ENCODE measurements at regions of chr12 and their contacts with region 1.

Region 1: GRCh38 chr12:95102916-95103671 is 29.7 kb upstream of the NR2C1 start:
- DNase-seq: peak; percentile 90
- ATAC-seq: peak; percentile 98
- H3K4me3 ChIP-seq: no peak overlapping the region
- H3K27ac ChIP-seq: no peak overlapping the region
- H3K4me1 ChIP-seq: peaks cover 19% of the 10 kb centered on the region
- H3K27me3 ChIP-seq: no peaks in the 10 kb centered on the region
- CTCF ChIP-seq: no peak
- EP300 ChIP-seq: peak; percentile 74 to 81; a peak in 3 of 4 replicates
- POLR2A ChIP-seq: no peak
- RAD21 ChIP-seq: no peak

Region 2: DNA sequence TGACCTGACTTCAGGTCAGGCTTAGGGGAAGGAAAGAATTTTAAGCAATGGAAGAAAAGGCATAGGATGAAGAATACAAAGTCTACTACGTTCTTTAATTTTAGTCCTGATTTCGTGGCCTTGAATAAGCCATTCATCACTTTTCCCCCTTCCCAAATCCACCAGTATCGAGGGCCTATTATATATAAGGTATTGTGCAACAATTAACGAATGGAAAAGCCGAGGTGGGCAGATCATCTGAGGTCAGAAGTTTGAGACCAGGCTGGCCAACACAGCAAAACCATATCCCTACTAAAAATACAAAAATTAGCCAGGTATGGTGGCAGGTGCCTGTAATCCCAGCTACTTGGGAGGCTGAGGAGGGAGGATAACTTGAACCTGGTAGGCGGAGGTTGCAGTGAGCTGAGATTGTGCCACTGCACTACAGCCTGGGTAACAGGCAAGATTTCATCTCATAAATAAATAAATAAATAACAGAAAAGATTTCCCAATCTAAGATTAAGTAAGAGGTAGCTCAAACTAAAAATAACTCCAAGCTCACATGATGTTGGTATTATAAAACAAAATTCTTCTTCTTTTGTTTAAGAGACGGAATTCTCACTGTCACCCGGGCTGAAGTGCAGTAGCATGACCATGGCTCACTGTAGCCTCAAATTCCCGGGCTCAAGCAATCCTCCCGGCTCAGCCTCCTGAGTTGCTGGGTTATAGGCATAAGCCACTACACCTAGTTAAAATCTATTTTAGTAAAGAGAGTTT is 28.7 kb after region 1 on chr12:
- CTCF ChIA-PET with region 1: no interaction called
- POLR2A ChIA-PET with region 1: no interaction called
- RAD21 ChIA-PET with region 1: no interaction called
- SMC1A ChIA-PET with region 1: no interaction called
- in situ Hi-C with region 1: no loop called
- intact Hi-C with region 1: no loop called
- DNase-seq: no peak
- ATAC-seq: no peak
- H3K4me3 ChIP-seq: no peak overlapping the region
- H3K27ac ChIP-seq: no peak overlapping the region
- H3K4me1 ChIP-seq: no peaks in the 10 kb centered on the region
- H3K27me3 ChIP-seq: no peaks in the 10 kb centered on the region
- CTCF ChIP-seq: no peak
- EP300 ChIP-seq: no peak
- POLR2A ChIP-seq: no peak
- RAD21 ChIP-seq: no peak

Region 3: GRCh38 chr12:95143621-95144205 is 40.6 kb after region 1 on chr12:
- CTCF ChIA-PET with region 1: no interaction called
- POLR2A ChIA-PET with region 1: no interaction called
- RAD21 ChIA-PET with region 1: no interaction called
- SMC1A ChIA-PET with region 1: no interaction called
- in situ Hi-C with region 1: no loop called
- intact Hi-C with region 1: no loop called
- DNase-seq: no peak
- ATAC-seq: no peak
- H3K4me3 ChIP-seq: no peak overlapping the region
- H3K27ac ChIP-seq: no peak overlapping the region
- H3K4me1 ChIP-seq: no peaks in the 10 kb centered on the region
- H3K27me3 ChIP-seq: no peaks in the 10 kb centered on the region
- CTCF ChIP-seq: no peak
- EP300 ChIP-seq: no peak
- POLR2A ChIP-seq: no peak
- RAD21 ChIP-seq: no peak

Region 4: DNA sequence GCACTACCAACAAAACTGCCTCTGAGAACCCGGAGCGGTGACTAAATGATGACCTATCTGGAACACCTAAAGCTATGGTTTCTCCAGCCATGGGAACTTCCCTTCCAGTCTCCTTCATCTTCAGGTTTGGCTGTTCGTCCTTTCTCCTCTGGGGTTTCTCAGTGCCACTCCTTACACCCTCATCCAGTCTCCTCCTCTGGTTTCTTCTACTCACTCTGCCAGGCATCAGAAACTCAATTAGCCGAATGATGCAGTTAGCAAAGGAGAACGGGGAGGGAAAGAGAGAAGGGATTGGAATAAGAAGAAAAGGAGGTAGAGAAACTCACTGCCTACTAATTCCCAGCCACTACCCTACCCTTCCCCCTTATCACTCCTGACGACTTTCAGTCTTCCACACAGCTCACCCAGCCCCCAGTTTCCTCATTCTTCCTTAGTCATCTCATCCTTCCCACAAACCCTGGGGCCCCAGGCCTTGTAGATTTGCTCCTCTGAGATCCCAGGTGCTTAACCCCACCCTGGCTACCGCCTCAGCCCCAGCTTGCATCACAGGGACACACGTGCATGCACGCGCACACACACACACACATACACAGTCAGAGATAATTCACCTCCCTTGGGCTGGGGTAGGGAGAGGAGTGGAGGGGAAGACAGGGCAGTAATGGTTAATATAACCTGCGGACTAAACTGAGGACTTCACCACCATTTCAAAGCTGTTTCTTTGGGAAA is 101.2 kb after region 1 on chr12:
- CTCF ChIA-PET with region 1: no interaction called
- POLR2A ChIA-PET with region 1: no interaction called
- RAD21 ChIA-PET with region 1: no interaction called
- SMC1A ChIA-PET with region 1: no interaction called
- in situ Hi-C with region 1: no loop called
- intact Hi-C with region 1: no loop called
- DNase-seq: no peak
- ATAC-seq: peak; percentile 50
- H3K4me3 ChIP-seq: no peak overlapping the region
- H3K27ac ChIP-seq: peak overlapping the region; percentile 56
- H3K4me1 ChIP-seq: peaks cover 35% of the 10 kb centered on the region
- H3K27me3 ChIP-seq: no peaks in the 10 kb centered on the region
- CTCF ChIP-seq: no peak
- EP300 ChIP-seq: no peak
- POLR2A ChIP-seq: no peak
- RAD21 ChIP-seq: no peak

Region 5: GRCh38 chr12:95700316-95700785 is 597.3 kb after region 1 on chr12:
- CTCF ChIA-PET with region 1: no interaction called
- POLR2A ChIA-PET with region 1: no interaction called
- RAD21 ChIA-PET with region 1: no interaction called
- SMC1A ChIA-PET with region 1: no interaction called
- in situ Hi-C with region 1: no loop called
- intact Hi-C with region 1: loop called (anchors 5 kb)
- DNase-seq: peak; percentile 83
- ATAC-seq: peak; percentile 97
- H3K4me3 ChIP-seq: no peak overlapping the region
- H3K27ac ChIP-seq: no peak overlapping the region
- H3K4me1 ChIP-seq: peaks cover 12% of the 10 kb centered on the region; the same call in 1 of the 2 replicates
- H3K27me3 ChIP-seq: peaks cover 1 to 12% of the 10 kb centered on the region in 2 experiments; a peak in 2 of 4 replicates
- CTCF ChIP-seq: no peak
- EP300 ChIP-seq: peak; percentile 69 to 77; a peak in 2 of 4 replicates
- POLR2A ChIP-seq: no peak
- RAD21 ChIP-seq: no peak

Measured in GM12878 (cell line).